Vagina (tissue), 2 donors: ENCODE measurements at regions of chr1 and their contacts with region 1.

Region 1: DNA sequence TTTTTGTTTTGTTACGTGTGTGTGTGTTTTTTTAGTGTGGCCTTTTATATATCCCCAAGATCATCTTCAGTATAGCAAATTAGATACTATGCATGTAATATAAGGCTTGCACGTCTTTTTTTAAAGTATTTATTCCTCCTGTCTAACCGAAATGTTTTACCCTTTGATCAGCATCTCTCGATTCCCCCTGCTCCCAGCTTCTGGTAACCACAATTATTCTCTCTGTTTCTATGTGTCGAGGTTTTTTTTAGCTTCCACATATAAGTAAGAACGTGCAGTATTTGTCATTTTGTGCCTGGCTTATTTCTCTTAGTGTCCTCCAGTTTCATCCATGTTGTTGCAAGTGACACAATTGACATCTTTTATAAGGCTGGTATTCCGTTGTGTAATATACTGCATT is 18.7 kb downstream of the CEP85 start:
- DNase-seq: no peak
- H3K4me3 ChIP-seq: no peak overlapping the region
- H3K27ac ChIP-seq: no peak overlapping the region
- H3K4me1 ChIP-seq: no peaks in the 10 kb centered on the region
- H3K27me3 ChIP-seq: no peaks in the 10 kb centered on the region
- CTCF ChIP-seq: no peak
- POLR2A ChIP-seq: no peak

Region 2: DNA sequence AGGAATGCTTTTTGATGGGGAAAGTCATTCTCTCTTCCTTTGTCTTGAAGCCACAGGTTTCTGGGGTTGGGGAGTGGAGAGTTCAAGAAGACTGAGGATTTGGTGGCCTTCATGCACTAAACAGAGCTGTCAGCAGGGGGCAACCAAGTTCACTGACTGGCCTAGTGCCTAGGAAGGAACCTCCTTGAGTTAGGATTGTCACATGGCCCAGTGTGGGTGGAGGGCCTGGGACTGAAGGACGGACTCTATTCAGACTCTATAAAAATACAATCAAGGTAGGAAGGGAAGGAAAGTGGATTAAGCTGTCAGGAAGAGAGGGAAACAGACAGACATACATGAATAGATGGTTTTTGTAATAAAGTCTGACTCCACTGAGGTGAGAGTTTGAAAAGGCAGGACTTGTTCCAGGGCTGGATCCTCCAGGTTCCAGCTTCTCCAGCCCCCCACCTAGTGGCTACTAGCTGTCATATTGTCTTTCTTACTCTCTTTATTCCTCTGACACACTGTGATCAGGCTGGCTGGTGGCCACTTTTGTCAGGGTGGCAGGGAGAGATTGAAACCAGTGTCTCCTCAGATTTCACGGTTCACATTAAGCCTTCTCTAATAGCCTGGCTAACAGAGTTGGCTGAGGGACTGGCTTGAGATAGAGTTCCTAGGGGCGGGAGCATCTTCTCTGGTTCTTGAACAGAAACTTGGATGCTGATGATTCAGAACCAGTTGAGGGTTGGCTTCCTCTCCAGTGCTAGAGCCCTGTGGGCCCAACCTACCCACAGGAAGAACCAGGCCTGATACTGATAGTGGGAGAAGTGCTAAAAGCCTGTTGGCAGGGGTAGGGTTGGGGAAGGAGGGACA is 23.1 kb after region 1 on chr1:
- intact Hi-C with region 1: loop called (anchors 1 kb)
- DNase-seq: no peak
- H3K4me3 ChIP-seq: no peak overlapping the region
- H3K27ac ChIP-seq: peak overlapping the region; percentile 95
- H3K4me1 ChIP-seq: peaks cover 57% of the 10 kb centered on the region
- H3K27me3 ChIP-seq: no peaks in the 10 kb centered on the region
- CTCF ChIP-seq: peak; percentile 74 to 95 (median 88)
- POLR2A ChIP-seq: no peak